ENCODE measurements at regions of chr16 and their contacts with region 1.

Region 1: GRCh38 chr16:4330277-4330874 is 14.5 kb downstream of the GLIS2 start:
- ATAC-seq: peak in 4 of 8 experiments; percentile 7 to 80 (median 58)
- H3K4me3 ChIP-seq: no peak overlapping the region
- H3K27ac ChIP-seq: no peak overlapping the region
- H3K4me1 ChIP-seq: peaks cover 20 to 21% of the 10 kb centered on the region in 2 donors

Region 2: GRCh38 chr16:4288148-4288921 is 42.0 kb before region 1 on chr16:
- in situ Hi-C with region 1: loop called in 1 of 9 experiments (anchors 10 kb)
- ATAC-seq: peak; percentile 77 to 98 (median 84)
- H3K4me3 ChIP-seq: no peak overlapping the region
- H3K27ac ChIP-seq: no peak overlapping the region
- H3K4me1 ChIP-seq: peaks cover 8 to 26% of the 10 kb centered on the region in 2 donors

Measured in motor neuron (in vitro differentiated cells).